Thyroid gland (tissue), 4 donors: ENCODE measurements at regions of chr1 and their contacts with region 1.

Region 1: DNA sequence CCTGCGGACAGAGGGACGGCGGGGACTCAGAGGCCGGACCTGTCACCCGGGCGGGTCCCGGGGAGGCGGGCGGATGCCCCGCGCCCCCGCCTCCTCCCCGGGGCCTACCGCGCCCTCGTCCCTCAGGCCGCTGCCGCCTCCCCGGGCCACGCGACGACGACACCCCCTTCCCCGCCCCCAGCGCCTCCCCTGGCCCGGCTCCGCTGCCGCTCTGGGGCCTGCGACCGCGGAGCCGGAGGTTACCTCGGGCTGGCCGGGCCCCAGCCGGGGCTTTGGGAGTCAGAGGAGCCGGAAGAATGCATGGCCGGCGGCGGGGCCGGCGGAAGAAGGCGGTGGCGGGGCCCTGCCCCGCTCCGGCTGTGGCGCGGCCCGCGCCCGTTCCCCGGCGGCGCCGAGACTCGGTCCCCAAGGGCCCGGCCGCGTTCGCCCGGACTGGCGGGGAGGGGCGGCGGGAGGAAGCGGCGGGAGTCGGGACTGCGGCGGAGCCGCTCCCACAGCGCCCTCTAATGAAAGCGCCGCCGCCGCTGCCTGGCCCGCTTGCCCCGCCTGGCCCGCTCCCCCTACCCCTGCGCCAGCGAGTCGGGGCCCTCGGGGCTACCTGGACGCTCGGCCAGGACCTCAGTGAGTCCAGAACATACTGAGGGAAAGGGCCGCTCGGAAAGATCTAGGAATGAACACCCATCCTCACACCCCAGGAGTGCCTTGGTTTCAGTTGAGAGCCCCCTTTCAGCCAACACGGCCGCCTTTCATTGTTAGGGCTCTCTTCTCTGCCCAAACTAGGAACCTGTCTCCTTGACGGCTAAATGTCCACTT is at the start of gene LPGAT1:
- DNase-seq: peak; percentile 81
- H3K4me3 ChIP-seq: peak within 1 kb of the TSS in 2 of 3 donors; percentile 69 to 93
- H3K27ac ChIP-seq: peak within 1 kb of the TSS; percentile 90 to 93 (median 93)
- H3K4me1 ChIP-seq: peaks cover 9 to 19% of the 10 kb centered on the region in 2 donors
- H3K27me3 ChIP-seq: no peaks in the 10 kb centered on the region
- CTCF ChIP-seq: peak; percentile 35 to 86 (median 66)
- POLR2A ChIP-seq: peak in 1 of 2 donors; percentile 71
- total RNA-seq, gene LPGAT1: 168 to 308 (median 203) TPM

Region 2: GRCh38 chr1:211643324-211644212 is 187.0 kb before region 1 on chr1:
- intact Hi-C with region 1: no loop called
- DNase-seq: peak; percentile 90 to 91
- H3K4me3 ChIP-seq: no peak overlapping the region
- H3K27ac ChIP-seq: peak overlapping the region; percentile 36 to 70 (median 50)
- H3K4me1 ChIP-seq: peaks cover 7 to 13% of the 10 kb centered on the region in 2 donors
- H3K27me3 ChIP-seq: no peaks in the 10 kb centered on the region
- CTCF ChIP-seq: peak in 1 of 6 experiments; percentile 8
- POLR2A ChIP-seq: no peak

Region 3: DNA sequence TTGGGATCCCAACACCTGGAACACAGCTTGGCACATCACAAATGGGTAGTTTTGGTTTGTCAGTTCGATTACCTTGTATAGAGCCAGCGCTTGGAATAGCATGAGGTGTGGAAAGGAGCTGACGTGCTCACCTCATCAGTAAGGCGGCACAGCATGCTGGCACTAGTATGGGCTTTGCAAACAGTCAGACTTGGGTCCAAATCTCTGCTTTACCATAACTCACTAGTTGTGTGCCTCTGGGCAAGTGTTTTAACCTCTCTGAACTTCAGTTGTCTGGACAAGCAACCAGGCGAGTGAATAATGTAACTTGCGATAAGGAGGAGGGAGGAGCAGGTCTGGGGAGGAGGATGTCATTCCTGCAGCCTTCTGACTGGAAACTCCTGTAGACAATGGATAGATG is 128.8 kb before region 1 on chr1:
- intact Hi-C with region 1: loop called (anchors 2 kb)
- DNase-seq: no peak
- H3K4me3 ChIP-seq: no peak overlapping the region
- H3K27ac ChIP-seq: no peak overlapping the region
- H3K4me1 ChIP-seq: peaks cover 5 to 39% of the 10 kb centered on the region in 2 donors
- H3K27me3 ChIP-seq: no peaks in the 10 kb centered on the region
- CTCF ChIP-seq: no peak
- POLR2A ChIP-seq: no peak